ENCODE measurements at regions of chr4 and their contacts with region 1.

Region 1: DNA sequence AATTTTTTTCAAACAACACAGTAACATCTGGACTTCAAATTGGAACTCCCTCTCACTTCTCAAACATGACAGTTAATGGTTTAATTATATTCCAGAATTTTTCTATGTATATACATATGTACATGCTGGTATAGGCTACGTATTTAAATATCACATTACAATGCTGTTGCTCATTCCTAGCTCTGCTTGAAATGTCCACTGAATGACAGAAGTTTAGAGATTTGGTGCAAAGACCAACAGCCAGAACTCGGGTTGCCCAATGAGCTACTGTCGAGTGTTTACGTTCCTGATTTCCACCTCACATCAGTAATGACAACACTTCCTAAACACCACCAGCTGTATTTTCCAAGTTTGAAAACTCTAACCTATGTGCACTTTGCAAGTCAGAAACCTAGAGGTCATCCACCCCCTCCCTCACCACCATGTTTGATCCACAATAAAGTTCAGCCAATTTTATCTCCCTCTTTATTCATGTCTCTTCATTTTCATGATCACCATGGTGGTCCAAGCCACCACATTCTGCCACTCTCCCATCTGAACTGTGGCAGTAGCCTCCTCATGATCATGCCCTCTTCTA is 49.3 kb upstream of the RPL34 start:
- DNase-seq: no peak
- H3K4me3 Mint-ChIP-seq: no peak overlapping the region
- H3K27ac Mint-ChIP-seq: no peak overlapping the region
- H3K4me1 Mint-ChIP-seq: peaks cover 24% of the 10 kb centered on the region
- H3K27me3 Mint-ChIP-seq: no peaks in the 10 kb centered on the region

Region 2: GRCh38 chr4:107757864-107758476 is 813.1 kb before region 1 on chr4:
- CTCF ChIA-PET with region 1: no interaction called
- intact Hi-C with region 1: loop called (anchors 2 kb)
- DNase-seq: no peak
- H3K4me3 Mint-ChIP-seq: no peak overlapping the region
- H3K27ac Mint-ChIP-seq: no peak overlapping the region
- H3K4me1 Mint-ChIP-seq: peaks cover 6% of the 10 kb centered on the region
- H3K27me3 Mint-ChIP-seq: peaks cover 5% of the 10 kb centered on the region

Region 3: GRCh38 chr4:108045694-108046038 is 525.4 kb before region 1 on chr4:
- CTCF ChIA-PET with region 1: interaction called, 8 read pairs
- intact Hi-C with region 1: loop called (anchors 1 kb)
- DNase-seq: peak; percentile 67
- H3K4me3 Mint-ChIP-seq: no peak overlapping the region
- H3K27ac Mint-ChIP-seq: peak overlapping the region; percentile 89
- H3K4me1 Mint-ChIP-seq: peaks cover 68% of the 10 kb centered on the region
- H3K27me3 Mint-ChIP-seq: no peaks in the 10 kb centered on the region

Region 4: DNA sequence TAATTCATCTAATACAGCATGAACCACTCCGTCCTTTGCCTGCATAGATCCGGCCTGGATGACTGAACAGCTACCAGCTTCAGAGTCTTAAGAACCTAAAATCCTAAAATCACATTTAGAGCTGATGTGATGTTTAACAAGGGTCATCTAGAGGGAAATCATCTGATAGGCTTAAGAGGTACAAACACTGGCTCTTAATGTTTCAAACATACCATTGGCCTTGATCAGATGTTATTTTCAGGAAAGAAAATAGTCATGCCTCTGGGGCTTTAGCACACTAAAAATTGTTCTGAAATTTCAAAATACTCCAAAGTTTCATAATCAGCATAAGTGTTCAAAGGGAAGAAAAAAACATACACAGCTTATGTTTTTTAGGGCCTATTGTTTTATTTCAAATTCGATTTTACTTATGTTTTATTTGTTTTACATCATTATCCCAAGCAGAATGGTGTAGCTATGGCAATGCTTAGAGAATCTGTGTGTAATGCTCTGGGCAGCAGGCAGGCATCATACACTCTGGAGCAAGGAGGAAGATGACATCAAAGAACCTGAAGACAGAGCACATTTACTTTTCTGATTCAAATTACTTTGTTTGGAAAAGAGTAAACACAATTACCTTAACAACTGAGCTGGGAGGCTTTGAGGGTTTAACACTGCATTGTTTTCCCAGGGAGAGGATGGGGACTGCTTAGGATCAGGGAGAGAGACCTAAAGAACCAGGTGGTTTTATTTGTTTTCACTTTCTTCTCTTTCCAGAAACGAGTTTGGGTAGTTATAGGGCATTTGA is 377.0 kb before region 1 on chr4:
- CTCF ChIA-PET with region 1: interaction called, 8 read pairs
- intact Hi-C with region 1: loop called (anchors 5 kb)
- DNase-seq: no peak
- H3K4me3 Mint-ChIP-seq: no peak overlapping the region
- H3K27ac Mint-ChIP-seq: no peak overlapping the region
- H3K4me1 Mint-ChIP-seq: peaks cover 29% of the 10 kb centered on the region
- H3K27me3 Mint-ChIP-seq: no peaks in the 10 kb centered on the region

Region 5: GRCh38 chr4:108492816-108493595 is 78.1 kb before region 1 on chr4:
- CTCF ChIA-PET with region 1: interaction called, 14 read pairs
- intact Hi-C with region 1: no loop called
- DNase-seq: peak; percentile 53
- H3K4me3 Mint-ChIP-seq: no peak overlapping the region
- H3K27ac Mint-ChIP-seq: no peak overlapping the region
- H3K4me1 Mint-ChIP-seq: no peaks in the 10 kb centered on the region
- H3K27me3 Mint-ChIP-seq: no peaks in the 10 kb centered on the region

Region 6: DNA sequence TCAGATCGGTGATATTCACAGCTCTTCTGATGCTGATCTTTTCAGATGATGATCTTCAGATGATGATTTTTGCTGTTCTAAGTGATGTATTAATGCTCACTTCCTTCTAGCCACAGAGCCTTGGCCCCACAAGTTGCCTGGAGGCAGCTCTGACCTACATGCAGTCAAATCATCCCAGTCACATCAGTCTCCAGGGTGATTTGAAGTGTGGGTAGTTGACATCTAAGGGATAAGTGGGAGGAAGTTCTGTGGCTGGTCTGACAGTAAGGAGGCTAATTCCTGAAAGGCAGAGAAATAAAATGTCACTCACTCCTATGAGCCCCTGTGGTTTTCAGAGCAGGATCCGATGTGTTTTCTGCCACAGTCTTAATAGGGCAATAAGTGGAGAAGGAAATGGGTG is 30.5 kb before region 1 on chr4:
- CTCF ChIA-PET with region 1: interaction called, 15 read pairs
- intact Hi-C with region 1: no loop called
- DNase-seq: peak; percentile 27
- H3K4me3 Mint-ChIP-seq: no peak overlapping the region
- H3K27ac Mint-ChIP-seq: no peak overlapping the region
- H3K4me1 Mint-ChIP-seq: peaks cover 29% of the 10 kb centered on the region
- H3K27me3 Mint-ChIP-seq: no peaks in the 10 kb centered on the region

Region 7: GRCh38 chr4:108730579-108730978 is 159.5 kb after region 1 on chr4:
- CTCF ChIA-PET with region 1: no interaction called
- intact Hi-C with region 1: no loop called
- DNase-seq: no peak
- H3K4me3 Mint-ChIP-seq: no peak overlapping the region
- H3K27ac Mint-ChIP-seq: no peak overlapping the region
- H3K4me1 Mint-ChIP-seq: no peaks in the 10 kb centered on the region
- H3K27me3 Mint-ChIP-seq: peaks cover 3% of the 10 kb centered on the region

Measured in activated naive CD4-positive, alpha-beta T cell treated with anti-CD3 and anti-CD28 coated beads for 36 hours (primary cell).